T-cell (primary cell): ENCODE measurements at regions of chr3 and their contacts with region 1.

Region 1: GRCh38 chr3:101724329-101725193 is at the start of gene CEP97:
- DNase-seq: peak; percentile 73 to 91 (median 82)
- ATAC-seq: peak; percentile 95 to 99 (median 96)
- H3K4me3 ChIP-seq: peak within 1 kb of the TSS; percentile 75 to 99
- H3K4me3 Mint-ChIP-seq: peak within 1 kb of the TSS; percentile 97 to 99 (median 98)
- H3K27ac ChIP-seq: peak within 1 kb of the TSS; percentile 56
- H3K27ac Mint-ChIP-seq: peak within 1 kb of the TSS; percentile 98 to 99
- H3K4me1 ChIP-seq: peaks cover 25 to 33% of the 10 kb centered on the region in 2 experiments
- H3K4me1 Mint-ChIP-seq: peaks cover 45 to 56% (median 51%) of the 10 kb centered on the region in 3 donors
- H3K27me3 ChIP-seq: no peaks in the 10 kb centered on the region
- H3K27me3 Mint-ChIP-seq: no peaks in the 10 kb centered on the region
- total RNA-seq, gene CEP97: 9.9 to 13.9 (median 12.7) TPM

Region 2: DNA sequence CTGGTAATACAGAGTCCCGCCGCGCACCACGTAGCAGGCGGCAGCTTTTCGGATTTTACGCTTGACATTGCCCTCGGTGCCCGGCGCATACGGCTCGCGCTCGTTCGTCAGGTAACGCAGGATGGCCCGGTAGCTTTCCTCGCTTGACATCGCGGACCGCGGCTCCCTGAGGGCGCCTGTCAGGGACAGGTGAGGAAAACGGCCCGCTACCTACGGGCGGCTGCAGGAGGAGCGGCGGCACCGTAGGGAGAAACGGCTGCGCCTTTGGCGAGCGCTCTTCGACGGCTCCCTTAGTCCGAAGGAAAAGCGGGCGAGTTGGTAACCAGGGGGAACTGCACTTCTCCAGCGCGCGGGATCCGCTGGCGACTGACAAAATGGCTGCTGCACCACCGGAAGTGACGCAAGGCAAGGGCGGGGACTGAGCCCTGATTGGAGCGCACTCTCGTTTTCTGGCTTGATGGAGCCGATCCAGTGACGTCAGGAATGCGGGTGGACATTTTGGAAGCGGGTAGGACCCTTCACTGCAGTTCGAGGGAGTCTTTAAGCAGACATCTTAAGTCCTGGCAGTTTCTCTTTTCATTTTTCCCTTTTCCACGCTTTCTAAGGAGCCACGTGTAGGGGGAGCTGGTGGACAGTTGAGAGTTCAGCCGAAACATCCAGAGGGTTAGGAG is 47.7 kb before region 1 on chr3 and contains the start of gene ZBTB11:
- CTCF ChIA-PET with region 1: interaction called in 1 of 2 experiments, 7 read pairs
- POLR2A ChIA-PET with region 1: interaction called, 4 to 10 read pairs
- DNase-seq: peak; percentile 98 to 100 (median 100)
- ATAC-seq: peak; percentile 72 to 75 (median 72)
- H3K4me3 ChIP-seq: peak within 1 kb of the TSS; percentile 89 to 97
- H3K4me3 Mint-ChIP-seq: peak within 1 kb of the TSS; percentile 91 to 98 (median 95)
- H3K27ac ChIP-seq: peak within 1 kb of the TSS; percentile 98
- H3K27ac Mint-ChIP-seq: peak within 1 kb of the TSS; percentile 97 to 99
- H3K4me1 ChIP-seq: peaks cover 24 to 32% of the 10 kb centered on the region in 2 experiments
- H3K4me1 Mint-ChIP-seq: peaks cover 58 to 59% (median 58%) of the 10 kb centered on the region in 3 donors
- H3K27me3 ChIP-seq: no peaks in the 10 kb centered on the region
- H3K27me3 Mint-ChIP-seq: no peaks in the 10 kb centered on the region
- total RNA-seq, gene ZBTB11: 38.7 to 61.4 (median 45.6) TPM

Region 3: DNA sequence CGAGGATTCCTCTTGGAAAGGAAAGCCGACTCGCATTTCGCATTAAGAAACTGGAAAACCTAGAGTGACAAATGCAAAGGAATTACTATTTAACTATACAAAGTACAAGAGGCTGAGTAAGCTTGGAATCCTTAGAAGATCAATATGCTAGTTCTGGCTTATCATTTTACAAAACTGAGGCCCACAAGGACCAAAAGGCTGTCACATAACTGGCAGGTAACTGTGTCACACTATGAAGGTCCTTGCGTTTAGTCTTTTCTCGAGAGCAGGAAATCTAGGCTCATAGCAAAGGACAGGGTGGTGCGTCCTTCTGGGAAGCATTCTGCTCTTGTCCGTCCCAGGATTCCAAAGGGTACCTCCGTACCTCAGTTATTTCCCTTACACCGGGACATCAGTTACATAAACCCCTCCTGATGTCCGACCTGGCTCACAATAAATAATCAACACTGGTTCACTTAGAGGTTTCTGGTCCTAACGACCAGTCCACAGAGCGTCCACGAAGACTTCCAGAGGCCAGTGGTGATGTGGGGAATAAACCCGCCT is 38.6 kb before region 1 on chr3:
- CTCF ChIA-PET with region 1: interaction called in 1 of 2 experiments, 12 read pairs
- POLR2A ChIA-PET with region 1: interaction called in 1 of 2 experiments, 8 read pairs
- DNase-seq: peak in 1 of 35 experiments; percentile 2
- ATAC-seq: peak; percentile 4 to 17 (median 12)
- H3K4me3 ChIP-seq: peak overlapping the region; percentile 66 to 98
- H3K4me3 Mint-ChIP-seq: peak overlapping the region; percentile 95 to 99 (median 99)
- H3K27ac ChIP-seq: peak overlapping the region; percentile 98
- H3K27ac Mint-ChIP-seq: peak overlapping the region; percentile 98 to 99
- H3K4me1 ChIP-seq: peaks cover 28 to 29% of the 10 kb centered on the region in 2 experiments
- H3K4me1 Mint-ChIP-seq: peaks cover 37 to 56% (median 48%) of the 10 kb centered on the region in 3 donors
- H3K27me3 ChIP-seq: no peaks in the 10 kb centered on the region
- H3K27me3 Mint-ChIP-seq: no peaks in the 10 kb centered on the region

Region 4: DNA sequence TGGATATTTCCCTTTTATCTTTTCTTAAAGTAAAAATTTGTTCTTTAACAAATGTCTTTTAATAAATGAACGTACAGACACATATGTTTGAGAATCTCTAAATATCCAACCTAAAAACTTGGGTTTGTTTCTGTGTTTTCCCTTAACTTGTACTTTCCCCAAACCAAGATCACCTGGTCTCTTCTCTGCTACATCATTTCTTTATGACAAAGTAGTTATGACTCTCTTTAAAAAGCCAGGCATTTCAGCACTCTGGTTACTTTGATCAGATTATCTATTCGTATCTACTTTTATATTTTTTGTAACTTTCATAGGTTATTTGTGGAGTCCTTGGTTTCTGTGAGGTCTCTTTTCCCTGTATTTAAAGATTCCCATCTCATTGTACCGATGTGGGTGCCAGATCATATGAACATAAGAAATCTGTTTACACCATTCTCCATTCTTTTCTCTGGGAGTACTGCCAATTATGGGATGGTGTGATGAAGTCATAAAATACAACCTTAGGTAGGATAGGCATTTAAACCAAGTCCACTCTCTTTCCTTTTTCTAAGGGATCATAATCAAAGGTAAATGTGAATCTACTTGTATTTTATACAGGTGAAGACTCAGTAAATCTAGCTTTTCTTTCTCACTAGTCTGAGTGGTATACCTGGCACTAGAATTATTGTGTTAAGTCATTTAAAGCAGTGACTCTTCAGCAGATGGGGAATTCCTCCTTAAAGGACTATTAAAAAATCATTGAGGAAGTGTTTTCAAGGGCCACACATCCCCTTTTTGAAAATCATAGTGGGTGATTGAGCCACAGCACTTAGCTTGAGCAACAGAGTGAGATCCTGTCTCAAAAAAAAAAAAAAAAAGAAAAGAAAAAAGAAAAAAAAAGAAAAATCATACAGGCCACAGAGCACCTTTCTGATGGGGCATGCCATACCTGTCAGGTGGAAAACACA is 112.4 kb after region 1 on chr3:
- CTCF ChIA-PET with region 1: no interaction called
- POLR2A ChIA-PET with region 1: no interaction called
- DNase-seq: no peak
- ATAC-seq: no peak
- H3K4me3 ChIP-seq: no peak overlapping the region
- H3K4me3 Mint-ChIP-seq: no peak overlapping the region
- H3K27ac ChIP-seq: no peak overlapping the region
- H3K27ac Mint-ChIP-seq: no peak overlapping the region
- H3K4me1 ChIP-seq: peaks cover 0 to 4% of the 10 kb centered on the region in 2 experiments
- H3K4me1 Mint-ChIP-seq: peaks cover 35 to 57% (median 55%) of the 10 kb centered on the region in 3 donors
- H3K27me3 ChIP-seq: no peaks in the 10 kb centered on the region
- H3K27me3 Mint-ChIP-seq: no peaks in the 10 kb centered on the region